MCF 10A (cell line): ENCODE measurements at regions of chr10 and their contacts with region 1.

Region 1: DNA sequence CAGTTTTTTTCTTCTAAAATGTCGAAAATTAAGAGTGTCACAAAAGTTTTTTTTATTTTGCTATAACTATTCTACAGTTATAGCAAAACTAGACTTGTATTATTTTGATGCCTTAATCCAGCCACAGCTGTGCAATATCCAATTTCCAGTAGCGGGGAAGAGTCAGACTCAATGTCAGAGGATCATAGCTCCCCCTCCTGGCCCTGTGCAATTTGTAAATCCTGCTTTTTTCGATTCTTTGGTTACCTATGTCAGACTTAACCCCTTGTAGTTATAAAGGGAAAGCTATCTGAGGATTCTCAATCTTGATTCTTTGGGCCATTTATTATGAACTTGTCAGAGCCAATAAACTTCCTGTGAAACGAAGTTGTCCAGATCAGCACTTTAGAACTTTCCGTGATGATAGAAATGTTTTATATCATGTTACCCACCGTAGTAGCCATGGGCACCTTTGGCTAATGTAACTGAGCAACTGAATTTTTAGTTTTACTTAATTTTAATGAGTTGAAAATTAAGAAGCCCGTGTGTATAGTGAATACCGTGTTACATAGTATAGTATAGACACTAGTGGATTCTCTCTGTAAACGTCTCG is 87.7 kb upstream of the PRKCQ start:
- DNase-seq: peak; percentile 61
- H3K4me3 Mint-ChIP-seq: no peak overlapping the region
- H3K27ac Mint-ChIP-seq: no peak overlapping the region
- H3K4me1 Mint-ChIP-seq: no peaks in the 10 kb centered on the region
- H3K27me3 Mint-ChIP-seq: no peaks in the 10 kb centered on the region
- CTCF ChIP-seq: peak; percentile 74

Region 2: DNA sequence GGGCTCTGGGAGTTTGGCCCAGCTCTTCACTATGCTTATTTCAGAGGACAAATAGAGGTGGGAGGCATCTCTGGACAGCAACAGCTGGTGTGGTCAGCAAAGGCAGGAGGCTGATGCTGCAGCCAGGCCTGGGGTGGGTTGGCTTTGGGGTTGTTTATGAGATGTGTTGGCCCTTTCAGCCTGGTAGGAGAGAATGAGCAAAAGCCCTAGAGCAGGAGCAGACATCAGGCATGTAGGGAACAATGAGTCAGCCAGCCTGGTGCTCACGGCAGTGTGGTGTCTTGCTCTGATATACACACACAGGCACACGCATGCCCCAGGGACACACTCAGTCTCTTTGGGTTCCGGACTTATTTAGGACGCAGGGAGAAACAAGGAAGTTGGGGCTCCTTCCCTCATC is 244.8 kb before region 1 on chr10:
- CTCF ChIA-PET with region 1: interaction called, 54 read pairs
- POLR2A ChIA-PET with region 1: interaction called, 8 read pairs
- intact Hi-C with region 1: no loop called
- DNase-seq: peak; percentile 41
- H3K4me3 Mint-ChIP-seq: no peak overlapping the region
- H3K27ac Mint-ChIP-seq: no peak overlapping the region
- H3K4me1 Mint-ChIP-seq: peaks cover 6% of the 10 kb centered on the region
- H3K27me3 Mint-ChIP-seq: no peaks in the 10 kb centered on the region
- CTCF ChIP-seq: no peak

Region 3: GRCh38 chr10:6580279-6581029 is 87.3 kb before region 1 on chr10:
- CTCF ChIA-PET with region 1: interaction called, 24 read pairs
- POLR2A ChIA-PET with region 1: interaction called, 3 read pairs
- intact Hi-C with region 1: loop called (anchors 1 kb)
- DNase-seq: peak; percentile 55
- H3K4me3 Mint-ChIP-seq: peak overlapping the region; percentile 81
- H3K27ac Mint-ChIP-seq: peak overlapping the region; percentile 49
- H3K4me1 Mint-ChIP-seq: no peaks in the 10 kb centered on the region
- H3K27me3 Mint-ChIP-seq: peaks cover 33% of the 10 kb centered on the region
- CTCF ChIP-seq: peak; percentile 60

Region 4: GRCh38 chr10:6778992-6779701 is 111.4 kb after region 1 on chr10:
- CTCF ChIA-PET with region 1: interaction called, 4 read pairs
- POLR2A ChIA-PET with region 1: no interaction called
- intact Hi-C with region 1: loop called (anchors 5 kb)
- DNase-seq: peak; percentile 99
- H3K4me3 Mint-ChIP-seq: peak overlapping the region; percentile 76
- H3K27ac Mint-ChIP-seq: peak overlapping the region; percentile 98
- H3K4me1 Mint-ChIP-seq: peaks cover 65% of the 10 kb centered on the region
- H3K27me3 Mint-ChIP-seq: no peaks in the 10 kb centered on the region
- CTCF ChIP-seq: no peak

Region 5: GRCh38 chr10:6795571-6795970 is 127.8 kb after region 1 on chr10:
- CTCF ChIA-PET with region 1: no interaction called
- POLR2A ChIA-PET with region 1: no interaction called
- intact Hi-C with region 1: no loop called
- DNase-seq: no peak
- H3K4me3 Mint-ChIP-seq: peak overlapping the region; percentile 31
- H3K27ac Mint-ChIP-seq: peak overlapping the region; percentile 84
- H3K4me1 Mint-ChIP-seq: peaks cover 28% of the 10 kb centered on the region
- H3K27me3 Mint-ChIP-seq: no peaks in the 10 kb centered on the region
- CTCF ChIP-seq: no peak

Region 6: GRCh38 chr10:7410862-7411670 is 743.3 kb after region 1 on chr10 and contains the start of gene SFMBT2:
- CTCF ChIA-PET with region 1: interaction called, 67 read pairs
- POLR2A ChIA-PET with region 1: interaction called, 8 read pairs
- intact Hi-C with region 1: no loop called
- DNase-seq: peak; percentile 68
- H3K4me3 Mint-ChIP-seq: peak within 1 kb of the TSS; percentile 86
- H3K27ac Mint-ChIP-seq: peak within 1 kb of the TSS; percentile 14
- H3K4me1 Mint-ChIP-seq: peaks cover 9% of the 10 kb centered on the region
- H3K27me3 Mint-ChIP-seq: no peaks in the 10 kb centered on the region
- CTCF ChIP-seq: peak; percentile 10
- total RNA-seq, gene SFMBT2: 5.8 and 7.4 TPM in 2 replicates